ENCODE measurements at regions of chr5 and their contacts with region 1.

Region 1: GRCh38 chr5:157142317-157143126 is at the start of gene MED7:
- DNase-seq: peak; percentile 99
- ATAC-seq: peak; percentile 100
- H3K4me3 ChIP-seq: peak within 1 kb of the TSS; percentile 88
- H3K27ac ChIP-seq: peak within 1 kb of the TSS; percentile 99
- H3K4me1 ChIP-seq: peaks cover 7% of the 10 kb centered on the region
- H3K27me3 ChIP-seq: no peaks in the 10 kb centered on the region
- CTCF ChIP-seq: no peak
- EP300 ChIP-seq: no peak
- POLR2A ChIP-seq: peak; percentile 96
- RAD21 ChIP-seq: no peak
- polyA plus RNA-seq, gene MED7: 42.6 to 47.7 TPM

Region 2: GRCh38 chr5:157157293-157157891 is 14.9 kb after region 1 on chr5:
- CTCF ChIA-PET with region 1: interaction called, 3 read pairs
- POLR2A ChIA-PET with region 1: interaction called, 15 read pairs
- RAD21 ChIA-PET with region 1: interaction called, 3 read pairs
- SMC1A ChIA-PET with region 1: interaction called, 5 read pairs
- in situ Hi-C with region 1: no loop called
- intact Hi-C with region 1: no loop called
- DNase-seq: no peak
- ATAC-seq: no peak
- H3K4me3 ChIP-seq: no peak overlapping the region
- H3K27ac ChIP-seq: no peak overlapping the region
- H3K4me1 ChIP-seq: no peaks in the 10 kb centered on the region
- H3K27me3 ChIP-seq: no peaks in the 10 kb centered on the region
- CTCF ChIP-seq: no peak
- EP300 ChIP-seq: no peak
- POLR2A ChIP-seq: no peak
- RAD21 ChIP-seq: no peak

Region 3: GRCh38 chr5:157167214-157167621 is 24.7 kb after region 1 on chr5:
- CTCF ChIA-PET with region 1: interaction called, 27 read pairs
- POLR2A ChIA-PET with region 1: interaction called, 13 read pairs
- RAD21 ChIA-PET with region 1: interaction called, 30 read pairs
- SMC1A ChIA-PET with region 1: interaction called, 26 read pairs
- in situ Hi-C with region 1: no loop called
- intact Hi-C with region 1: no loop called
- DNase-seq: peak; percentile 16
- ATAC-seq: peak; percentile 72
- H3K4me3 ChIP-seq: no peak overlapping the region
- H3K27ac ChIP-seq: no peak overlapping the region
- H3K4me1 ChIP-seq: peaks cover 10% of the 10 kb centered on the region
- H3K27me3 ChIP-seq: no peaks in the 10 kb centered on the region; a peak in 1 of 4 replicates
- CTCF ChIP-seq: no peak
- EP300 ChIP-seq: no peak
- POLR2A ChIP-seq: no peak
- RAD21 ChIP-seq: no peak

Measured in GM12878 (cell line).